ENCODE measurements at regions of chr1 and their contacts with region 1.

Region 1: GRCh38 chr1:36342481-36343478 is 19.3 kb upstream of the EVA1B start:
- DNase-seq: peak; percentile 39 to 59
- ATAC-seq: peak; percentile 50 to 77 (median 70)
- H3K4me3 ChIP-seq: no peak overlapping the region
- H3K27ac ChIP-seq: peak overlapping the region in 3 of 10 donors; percentile 45 to 69 (median 55)
- H3K4me1 ChIP-seq: peaks cover 2 to 38% (median 23%) of the 10 kb centered on the region in 9 donors
- H3K27me3 ChIP-seq: no peaks in the 10 kb centered on the region
- CTCF ChIP-seq: peak; percentile 44 to 75 (median 70)

Region 2: GRCh38 chr1:36385410-36386257 is 42.9 kb after region 1 on chr1 and contains the start of gene STK40:
- intact Hi-C with region 1: no loop called
- DNase-seq: peak; percentile 98 to 99
- ATAC-seq: peak; percentile 88 to 97 (median 94)
- H3K4me3 ChIP-seq: peak within 1 kb of the TSS; percentile 83 to 100 (median 95)
- H3K27ac ChIP-seq: peak within 1 kb of the TSS; percentile 78 to 99 (median 96)
- H3K4me1 ChIP-seq: peaks cover 11 to 84% (median 73%) of the 10 kb centered on the region in 9 donors
- H3K27me3 ChIP-seq: no peaks in the 10 kb centered on the region
- CTCF ChIP-seq: peak in 1 of 9 donors; percentile 13
- total RNA-seq, gene STK40: 45.2 to 81.6 (median 60.8) TPM

Region 3: GRCh38 chr1:36420836-36421664 is 78.3 kb after region 1 on chr1:
- intact Hi-C with region 1: loop called (anchors 1 to 5 kb)
- DNase-seq: peak; percentile 90 to 91
- ATAC-seq: peak; percentile 89 to 98 (median 94)
- H3K4me3 ChIP-seq: no peak overlapping the region
- H3K27ac ChIP-seq: peak overlapping the region in 2 of 10 donors; percentile 8 to 60
- H3K4me1 ChIP-seq: peaks cover 4 to 18% (median 13%) of the 10 kb centered on the region in 9 donors
- H3K27me3 ChIP-seq: no peaks in the 10 kb centered on the region
- CTCF ChIP-seq: peak; percentile 90 to 97 (median 95)